ENCODE measurements at regions of chr2 and their contacts with region 1.

Region 1: DNA sequence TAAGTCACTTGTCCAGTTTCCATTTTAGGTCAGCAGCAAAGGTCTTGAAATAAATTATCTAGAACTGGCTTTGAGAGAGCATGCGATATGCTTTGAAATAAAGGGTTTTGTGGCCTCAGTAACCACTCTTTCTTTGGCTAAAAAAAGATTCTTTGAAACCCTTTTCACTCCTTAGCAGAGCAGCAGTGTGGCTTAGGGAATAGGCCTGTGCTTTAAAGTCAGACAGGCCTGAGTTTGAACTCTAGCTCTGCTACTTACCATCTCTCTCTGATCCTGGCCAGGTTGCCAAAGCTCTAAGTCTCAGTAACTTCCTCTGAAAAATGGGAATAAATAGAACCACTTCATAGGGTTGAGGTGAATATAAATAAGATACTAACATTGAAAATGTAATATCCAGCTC is 52.7 kb downstream of the QPCT start:
- DNase-seq: no peak
- ATAC-seq: 0 out of 2 replicates have a peak, but pooled peaks have one; percentile 62
- H3K4me3 ChIP-seq: no peak overlapping the region
- H3K27ac ChIP-seq: no peak overlapping the region
- H3K4me1 ChIP-seq: no peaks in the 10 kb centered on the region
- H3K27me3 ChIP-seq: peaks cover 3% of the 10 kb centered on the region; the same call in 1 of the 2 replicates
- CTCF ChIP-seq: no peak

Region 2: DNA sequence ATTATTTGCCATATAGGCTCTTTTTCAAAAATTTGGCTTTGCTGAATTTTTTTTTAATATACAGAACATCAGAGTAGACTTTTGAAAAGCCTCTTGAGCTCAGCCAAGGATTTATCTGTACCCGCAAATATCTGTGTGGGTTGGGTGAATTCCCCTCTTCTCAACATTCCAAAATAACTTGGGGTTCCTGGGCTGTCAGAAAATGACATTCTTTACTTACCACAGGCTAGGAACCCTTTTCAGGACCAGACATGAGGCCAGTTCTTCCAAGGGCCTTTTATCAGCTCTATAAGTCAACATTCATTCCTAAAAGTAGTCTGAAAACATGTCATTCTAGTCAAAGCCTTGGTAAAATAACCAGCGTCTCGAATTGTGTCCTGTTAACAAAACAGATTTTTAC is 770.4 kb before region 1 on chr2:
- CTCF ChIA-PET with region 1: no interaction called
- POLR2A ChIA-PET with region 1: no interaction called
- in situ Hi-C with region 1: no loop called
- intact Hi-C with region 1: no loop called
- DNase-seq: no peak
- ATAC-seq: no peak
- H3K4me3 ChIP-seq: no peak overlapping the region
- H3K27ac ChIP-seq: no peak overlapping the region
- H3K4me1 ChIP-seq: no peaks in the 10 kb centered on the region
- H3K27me3 ChIP-seq: no peaks in the 10 kb centered on the region
- CTCF ChIP-seq: no peak

Region 3: DNA sequence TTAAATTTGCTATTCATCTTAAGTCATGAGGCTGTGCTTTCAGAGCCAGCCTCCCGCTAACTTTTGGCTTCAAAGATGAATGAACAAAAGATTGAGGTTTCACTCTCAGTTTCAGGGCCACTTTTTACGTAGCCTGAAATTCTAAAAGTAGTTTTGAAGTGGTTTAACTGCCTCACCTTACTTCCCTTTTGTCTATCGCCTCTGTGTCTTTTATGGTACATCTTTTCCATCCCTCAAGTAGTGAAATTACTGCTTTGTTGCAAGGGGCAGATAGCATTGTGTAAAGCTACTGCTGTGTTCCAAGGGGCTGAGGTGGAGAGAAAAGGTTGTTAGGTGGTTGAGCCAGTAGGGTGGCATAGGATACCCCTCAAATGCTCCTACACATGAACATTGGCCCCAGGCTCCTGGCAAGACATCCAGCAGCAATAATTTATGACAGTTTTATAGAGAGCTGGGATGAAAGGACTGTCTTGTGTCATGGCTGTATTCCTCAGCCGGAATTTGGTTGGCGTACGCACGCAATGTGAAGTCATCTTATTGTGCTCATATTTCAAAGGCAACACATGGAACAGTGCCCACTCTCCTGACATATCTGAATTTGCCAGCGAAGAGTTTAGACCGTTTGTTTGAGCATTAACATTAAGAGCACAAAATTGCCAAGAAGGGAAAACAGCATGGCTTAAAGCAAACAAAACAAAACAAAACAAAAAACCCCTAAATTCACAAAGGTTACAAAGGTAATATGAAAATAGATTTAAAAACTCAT is 20.6 kb before region 1 on chr2:
- CTCF ChIA-PET with region 1: interaction called, 14 read pairs
- POLR2A ChIA-PET with region 1: no interaction called
- in situ Hi-C with region 1: no loop called
- intact Hi-C with region 1: no loop called
- DNase-seq: no peak
- ATAC-seq: no peak
- H3K4me3 ChIP-seq: no peak overlapping the region
- H3K27ac ChIP-seq: no peak overlapping the region
- H3K4me1 ChIP-seq: no peaks in the 10 kb centered on the region
- H3K27me3 ChIP-seq: peaks cover 8% of the 10 kb centered on the region; the same call in 1 of the 2 replicates
- CTCF ChIP-seq: no peak

Region 4: GRCh38 chr2:37441055-37441454 is 43.9 kb after region 1 on chr2:
- CTCF ChIA-PET with region 1: no interaction called
- POLR2A ChIA-PET with region 1: no interaction called
- in situ Hi-C with region 1: no loop called
- intact Hi-C with region 1: no loop called
- DNase-seq: no peak
- ATAC-seq: no peak
- H3K4me3 ChIP-seq: no peak overlapping the region
- H3K27ac ChIP-seq: no peak overlapping the region
- H3K4me1 ChIP-seq: no peaks in the 10 kb centered on the region
- H3K27me3 ChIP-seq: peaks cover 2% of the 10 kb centered on the region; the same call in 1 of the 2 replicates
- CTCF ChIP-seq: no peak

Region 5: GRCh38 chr2:37489041-37489456 is 91.9 kb after region 1 on chr2:
- CTCF ChIA-PET with region 1: no interaction called
- POLR2A ChIA-PET with region 1: no interaction called
- in situ Hi-C with region 1: no loop called
- intact Hi-C with region 1: no loop called
- DNase-seq: no peak
- ATAC-seq: no peak
- H3K4me3 ChIP-seq: no peak overlapping the region
- H3K27ac ChIP-seq: no peak overlapping the region
- H3K4me1 ChIP-seq: no peaks in the 10 kb centered on the region
- H3K27me3 ChIP-seq: 0 out of 2 replicates have a peak, but pooled peaks cover 2% of the 10 kb centered on the region
- CTCF ChIP-seq: no peak

Region 6: DNA sequence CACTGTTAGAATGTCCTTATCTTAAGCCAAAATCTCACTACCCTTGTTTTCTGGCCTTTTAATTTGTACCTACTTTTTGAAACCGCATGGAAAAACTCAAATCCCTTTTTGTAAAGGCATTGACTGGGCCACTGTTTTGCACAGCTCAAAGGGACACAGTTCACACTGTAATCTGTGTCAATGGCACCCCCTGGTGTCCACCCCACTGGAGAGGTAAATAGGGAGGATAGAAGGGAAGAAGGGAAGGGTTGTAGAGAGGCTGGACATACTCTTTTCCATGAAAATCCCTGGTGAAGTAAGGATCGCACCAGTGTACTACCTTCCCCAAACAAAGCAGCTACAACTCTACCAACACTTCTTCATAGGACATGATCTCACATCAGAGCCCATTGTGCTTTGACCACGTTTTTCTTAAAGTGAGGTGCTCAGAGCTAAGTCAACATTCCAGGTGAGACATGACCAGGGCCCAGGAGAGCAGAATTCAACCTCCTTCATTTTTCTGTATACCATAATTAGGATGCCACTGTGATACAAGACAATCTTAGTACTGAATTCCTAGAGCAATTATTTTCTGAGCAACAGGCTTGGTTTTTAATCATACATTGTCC is 435.5 kb after region 1 on chr2:
- CTCF ChIA-PET with region 1: interaction called, 9 read pairs
- POLR2A ChIA-PET with region 1: no interaction called
- in situ Hi-C with region 1: no loop called
- intact Hi-C with region 1: loop called (anchors 2 kb)
- DNase-seq: peak; percentile 67
- ATAC-seq: peak; percentile 97
- H3K4me3 ChIP-seq: no peak overlapping the region
- H3K27ac ChIP-seq: no peak overlapping the region
- H3K4me1 ChIP-seq: no peaks in the 10 kb centered on the region
- H3K27me3 ChIP-seq: no peaks in the 10 kb centered on the region; the same call in 1 of the 2 replicates
- CTCF ChIP-seq: peak; percentile 80

Region 7: GRCh38 chr2:38528008-38528442 is 1130.9 kb after region 1 on chr2:
- CTCF ChIA-PET with region 1: no interaction called
- POLR2A ChIA-PET with region 1: no interaction called
- in situ Hi-C with region 1: no loop called
- intact Hi-C with region 1: no loop called
- DNase-seq: no peak
- ATAC-seq: peak; percentile 78
- H3K4me3 ChIP-seq: peak overlapping the region; percentile 33 to 37
- H3K27ac ChIP-seq: no peak overlapping the region
- H3K4me1 ChIP-seq: no peaks in the 10 kb centered on the region
- H3K27me3 ChIP-seq: no peaks in the 10 kb centered on the region
- CTCF ChIP-seq: no peak

Measured in Panc1 (cell line).